Aorta (tissue), 5 donors: ENCODE measurements at regions of chr2 and their contacts with region 1.

Region 1: GRCh38 chr2:66434679-66435548 is at the start of gene MEIS1:
- DNase-seq: peak; percentile 93 to 94
- ATAC-seq: peak; percentile 93
- H3K4me3 ChIP-seq: peak within 1 kb of the TSS; percentile 91 to 95
- H3K27ac ChIP-seq: peak within 1 kb of the TSS; percentile 64 to 87
- H3K4me1 ChIP-seq: no peaks in the 10 kb centered on the region
- H3K27me3 ChIP-seq: no peaks in the 10 kb centered on the region
- total RNA-seq, gene MEIS1: 35.4 to 76.6 TPM

Region 2: GRCh38 chr2:66186537-66186936 is 248.4 kb before region 1 on chr2:
- intact Hi-C with region 1: no loop called
- DNase-seq: no peak
- ATAC-seq: no peak
- H3K4me3 ChIP-seq: no peak overlapping the region
- H3K27ac ChIP-seq: no peak overlapping the region
- H3K4me1 ChIP-seq: no peaks in the 10 kb centered on the region
- H3K27me3 ChIP-seq: no peaks in the 10 kb centered on the region

Region 3: GRCh38 chr2:66839551-66840320 is 404.8 kb after region 1 on chr2:
- intact Hi-C with region 1: loop called in 1 of 2 experiments (anchors 10 kb)
- DNase-seq: no peak
- ATAC-seq: peak; percentile 54
- H3K4me3 ChIP-seq: no peak overlapping the region
- H3K27ac ChIP-seq: peak overlapping the region; percentile 83 to 90
- H3K4me1 ChIP-seq: peaks cover 0 to 2% of the 10 kb centered on the region in 2 donors
- H3K27me3 ChIP-seq: no peaks in the 10 kb centered on the region

Region 4: DNA sequence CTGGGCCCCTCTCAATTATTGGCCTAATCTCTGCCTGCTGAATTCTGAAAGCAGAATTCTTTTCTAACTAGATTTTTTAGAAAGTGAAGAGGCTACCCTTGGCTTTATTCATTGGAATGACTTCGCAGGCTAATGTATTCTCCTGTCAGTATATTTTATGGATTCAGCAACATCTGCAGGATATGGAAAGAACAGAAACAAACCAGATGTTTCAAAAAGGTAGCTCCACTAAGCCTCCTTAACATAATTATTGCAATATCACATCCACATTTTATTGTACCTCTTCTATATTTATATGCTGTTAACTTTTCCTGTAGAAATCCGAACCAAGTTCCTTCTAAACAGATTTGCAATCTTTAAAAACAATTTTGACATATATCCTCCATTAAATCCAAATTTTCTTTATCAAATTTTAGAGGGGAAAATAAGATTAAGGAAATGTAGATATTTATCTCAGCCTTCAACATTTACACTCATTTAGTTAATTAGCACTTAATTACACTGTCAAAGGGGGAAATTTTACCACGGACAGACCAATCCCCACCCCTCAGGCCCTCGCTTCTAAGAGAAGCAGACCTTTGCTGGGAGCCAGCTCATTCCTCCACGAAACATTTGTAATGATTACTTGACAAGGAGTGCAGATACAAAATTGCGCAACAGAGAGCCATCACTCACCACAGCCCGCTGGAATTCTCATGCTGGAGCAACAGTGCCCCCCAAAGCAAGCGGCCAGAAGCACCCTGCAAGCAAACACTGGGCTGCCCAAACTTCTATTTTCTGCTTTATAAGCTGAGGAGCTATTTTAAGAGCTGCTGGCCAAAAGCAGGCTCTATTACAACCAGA is 1215.6 kb after region 1 on chr2:
- intact Hi-C with region 1: loop called (anchors 5 kb)
- DNase-seq: peak; percentile 88 to 89
- ATAC-seq: peak; percentile 94
- H3K4me3 ChIP-seq: no peak overlapping the region
- H3K27ac ChIP-seq: no peak overlapping the region
- H3K4me1 ChIP-seq: peaks cover 0 to 1% of the 10 kb centered on the region in 2 donors
- H3K27me3 ChIP-seq: no peaks in the 10 kb centered on the region

Region 5: DNA sequence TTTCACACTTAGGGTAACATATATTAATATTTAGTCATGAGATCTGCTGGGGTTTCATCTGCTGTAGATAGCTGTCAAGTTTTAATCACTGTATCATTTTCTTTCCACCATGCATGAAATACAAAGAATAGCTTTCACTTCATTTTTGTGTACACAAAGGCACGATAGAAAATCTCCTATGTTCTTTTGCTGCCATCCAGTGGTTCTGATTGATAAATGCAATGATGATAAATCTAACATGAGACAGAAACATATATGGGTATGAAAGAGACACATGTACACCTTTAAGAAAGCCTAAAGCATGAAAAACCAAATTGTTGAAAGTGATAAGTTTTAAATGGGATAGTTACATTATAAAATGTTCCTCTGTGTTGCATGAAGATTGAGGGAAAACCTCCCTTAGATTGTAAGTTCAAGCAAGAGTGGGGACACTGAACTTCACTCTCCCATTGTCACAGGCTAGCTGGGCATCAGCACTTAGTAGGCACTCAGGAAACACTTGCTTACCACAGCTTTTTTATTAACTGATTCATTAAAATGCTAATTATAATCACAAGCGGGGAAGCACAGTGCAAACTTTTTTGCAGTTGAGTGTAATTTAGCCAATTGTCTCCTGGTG is 1596.7 kb after region 1 on chr2:
- intact Hi-C with region 1: loop called in 1 of 2 experiments (anchors 10 kb)
- DNase-seq: no peak
- ATAC-seq: peak; percentile 64
- H3K4me3 ChIP-seq: no peak overlapping the region
- H3K27ac ChIP-seq: no peak overlapping the region
- H3K4me1 ChIP-seq: no peaks in the 10 kb centered on the region
- H3K27me3 ChIP-seq: no peaks in the 10 kb centered on the region